PC-9 (cell line): ENCODE measurements at regions of chr11 and their contacts with region 1.

Region 1: GRCh38 chr11:35617687-35618496 is at the start of gene FJX1:
- DNase-seq: peak; percentile 42 to 74
- H3K4me3 ChIP-seq: peak within 1 kb of the TSS; percentile 66
- H3K27ac ChIP-seq: peak within 1 kb of the TSS; percentile 42
- H3K4me1 ChIP-seq: peaks cover 49% of the 10 kb centered on the region
- H3K27me3 ChIP-seq: no peaks in the 10 kb centered on the region
- CTCF ChIP-seq: no peak
- total RNA-seq, gene FJX1: 14.8 and 17.5 TPM in 2 replicates

Region 2: GRCh38 chr11:34916015-34916842 is 701.7 kb before region 1 on chr11 and contains the starts of genes APIP and PDHX:
- CTCF ChIA-PET with region 1: no interaction called
- POLR2A ChIA-PET with region 1: no interaction called
- intact Hi-C with region 1: loop called (anchors 5 kb)
- DNase-seq: peak; percentile 98 to 99
- H3K4me3 ChIP-seq: peak within 1 kb of the TSS; percentile 74
- H3K27ac ChIP-seq: peak within 1 kb of the TSS; percentile 83
- H3K4me1 ChIP-seq: peaks cover 26% of the 10 kb centered on the region
- H3K27me3 ChIP-seq: no peaks in the 10 kb centered on the region
- CTCF ChIP-seq: no peak
- total RNA-seq, gene APIP: 34.1 and 41.0 TPM in 2 replicates
- total RNA-seq, gene PDHX: 44.7 and 47.0 TPM in 2 replicates

Region 3: DNA sequence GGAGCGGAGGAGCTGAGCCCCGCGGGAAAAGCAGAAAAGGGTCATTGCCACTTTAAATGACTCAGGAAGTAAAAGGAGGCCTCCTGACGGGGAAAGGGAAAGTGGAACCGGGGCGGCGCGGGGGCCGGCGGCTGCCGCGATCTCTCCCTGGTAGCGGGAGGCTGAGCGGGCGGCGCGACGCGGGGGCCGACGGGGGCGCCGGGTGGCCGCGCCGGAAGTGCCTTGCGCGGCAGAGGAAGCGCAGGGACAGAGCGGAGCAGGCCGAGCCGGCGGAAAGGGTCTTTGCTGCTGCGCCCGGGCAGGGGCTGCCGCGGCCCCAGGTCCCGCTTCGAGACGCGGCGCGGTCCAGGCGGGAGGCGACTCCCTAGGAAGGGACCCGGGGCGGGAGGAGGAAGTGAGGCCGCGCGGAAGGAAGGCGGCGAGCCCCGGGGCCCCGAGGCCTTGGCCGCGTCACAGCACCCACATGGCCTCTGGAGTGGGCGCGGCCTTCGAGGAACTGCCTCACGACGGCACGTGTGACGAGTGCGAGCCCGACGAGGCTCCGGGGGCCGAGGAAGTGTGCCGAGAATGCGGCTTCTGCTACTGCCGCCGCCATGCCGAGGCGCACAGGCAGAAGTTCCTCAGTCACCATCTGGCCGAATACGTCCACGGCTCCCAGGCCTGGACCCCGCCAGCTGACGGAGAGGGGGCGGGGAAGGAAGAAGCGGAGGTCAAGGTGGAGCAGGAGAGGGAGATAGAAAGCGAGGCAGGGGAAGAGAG is 44.9 kb after region 1 on chr11 and contains the start of gene TRIM44:
- CTCF ChIA-PET with region 1: no interaction called
- POLR2A ChIA-PET with region 1: no interaction called
- intact Hi-C with region 1: loop called (anchors 1 kb)
- DNase-seq: peak; percentile 81 to 89
- H3K4me3 ChIP-seq: peak within 1 kb of the TSS; percentile 88
- H3K27ac ChIP-seq: peak within 1 kb of the TSS; percentile 89
- H3K4me1 ChIP-seq: peaks cover 47% of the 10 kb centered on the region
- H3K27me3 ChIP-seq: no peaks in the 10 kb centered on the region
- CTCF ChIP-seq: no peak
- total RNA-seq, gene TRIM44: 91.7 and 100 TPM in 2 replicates

Region 4: GRCh38 chr11:35735903-35736302 is 118.0 kb after region 1 on chr11:
- CTCF ChIA-PET with region 1: no interaction called
- POLR2A ChIA-PET with region 1: no interaction called
- intact Hi-C with region 1: no loop called
- DNase-seq: no peak
- H3K4me3 ChIP-seq: no peak overlapping the region
- H3K27ac ChIP-seq: no peak overlapping the region
- H3K4me1 ChIP-seq: no peaks in the 10 kb centered on the region
- H3K27me3 ChIP-seq: no peaks in the 10 kb centered on the region
- CTCF ChIP-seq: no peak

Region 5: GRCh38 chr11:35822815-35823495 is 205.1 kb after region 1 on chr11:
- CTCF ChIA-PET with region 1: interaction called, 10 read pairs
- POLR2A ChIA-PET with region 1: interaction called, 3 read pairs
- intact Hi-C with region 1: loop called (anchors 1 kb)
- DNase-seq: no peak
- H3K4me3 ChIP-seq: no peak overlapping the region
- H3K27ac ChIP-seq: no peak overlapping the region
- H3K4me1 ChIP-seq: 0 out of 2 replicates have a peak, but pooled peaks cover 8% of the 10 kb centered on the region
- H3K27me3 ChIP-seq: no peaks in the 10 kb centered on the region
- CTCF ChIP-seq: no peak

Region 6: GRCh38 chr11:35943713-35944655 is 326.1 kb after region 1 on chr11 and contains the start of gene LDLRAD3:
- CTCF ChIA-PET with region 1: no interaction called
- POLR2A ChIA-PET with region 1: no interaction called
- intact Hi-C with region 1: loop called (anchors 5 kb)
- DNase-seq: peak; percentile 64 to 74
- H3K4me3 ChIP-seq: peak within 1 kb of the TSS; percentile 69
- H3K27ac ChIP-seq: no peak within 1 kb of the TSS
- H3K4me1 ChIP-seq: peaks cover 28% of the 10 kb centered on the region
- H3K27me3 ChIP-seq: no peaks in the 10 kb centered on the region
- CTCF ChIP-seq: no peak
- total RNA-seq, gene LDLRAD3: 15.9 and 19.5 TPM in 2 replicates

Region 7: GRCh38 chr11:36149538-36150242 is 531.8 kb after region 1 on chr11:
- CTCF ChIA-PET with region 1: no interaction called
- POLR2A ChIA-PET with region 1: no interaction called
- intact Hi-C with region 1: loop called (anchors 1 kb)
- DNase-seq: peak; percentile 94 to 100
- H3K4me3 ChIP-seq: no peak overlapping the region; the same call in 1 of the 2 replicates
- H3K27ac ChIP-seq: peak overlapping the region; percentile 89
- H3K4me1 ChIP-seq: peaks cover 30% of the 10 kb centered on the region
- H3K27me3 ChIP-seq: no peaks in the 10 kb centered on the region
- CTCF ChIP-seq: peak; percentile 88

Region 8: DNA sequence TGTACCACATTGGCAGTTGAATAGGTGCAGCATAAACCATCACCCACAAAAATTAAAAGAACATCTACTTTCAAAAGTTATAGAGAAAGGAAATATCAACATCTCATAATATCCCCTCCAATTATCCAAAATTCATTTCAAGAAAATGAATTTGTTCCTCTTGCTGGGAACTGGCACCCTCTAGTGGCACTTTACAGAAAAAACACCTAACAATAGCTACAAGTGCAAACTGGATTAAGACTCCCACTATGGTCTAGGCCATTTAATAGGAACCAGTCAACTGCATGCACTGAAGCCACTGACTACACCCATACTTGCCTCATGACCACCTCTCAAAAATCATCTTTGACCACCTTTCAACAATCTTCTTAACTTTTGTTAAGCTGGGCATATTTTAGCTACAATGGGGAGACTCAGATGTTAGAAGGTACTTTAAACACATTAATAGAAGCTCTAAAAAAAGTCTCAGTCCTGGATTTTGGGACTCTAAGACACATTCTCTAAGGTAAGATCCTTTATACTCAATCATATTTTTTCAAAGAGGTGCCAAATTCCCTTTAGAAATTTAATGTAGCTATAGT is 874.9 kb after region 1 on chr11:
- CTCF ChIA-PET with region 1: no interaction called
- POLR2A ChIA-PET with region 1: no interaction called
- intact Hi-C with region 1: loop called (anchors 5 kb)
- DNase-seq: no peak
- H3K4me3 ChIP-seq: no peak overlapping the region
- H3K27ac ChIP-seq: no peak overlapping the region
- H3K4me1 ChIP-seq: no peaks in the 10 kb centered on the region
- H3K27me3 ChIP-seq: no peaks in the 10 kb centered on the region
- CTCF ChIP-seq: peak; percentile 95